ENCODE measurements at regions of chr2 and their contacts with region 1.

Region 1: DNA sequence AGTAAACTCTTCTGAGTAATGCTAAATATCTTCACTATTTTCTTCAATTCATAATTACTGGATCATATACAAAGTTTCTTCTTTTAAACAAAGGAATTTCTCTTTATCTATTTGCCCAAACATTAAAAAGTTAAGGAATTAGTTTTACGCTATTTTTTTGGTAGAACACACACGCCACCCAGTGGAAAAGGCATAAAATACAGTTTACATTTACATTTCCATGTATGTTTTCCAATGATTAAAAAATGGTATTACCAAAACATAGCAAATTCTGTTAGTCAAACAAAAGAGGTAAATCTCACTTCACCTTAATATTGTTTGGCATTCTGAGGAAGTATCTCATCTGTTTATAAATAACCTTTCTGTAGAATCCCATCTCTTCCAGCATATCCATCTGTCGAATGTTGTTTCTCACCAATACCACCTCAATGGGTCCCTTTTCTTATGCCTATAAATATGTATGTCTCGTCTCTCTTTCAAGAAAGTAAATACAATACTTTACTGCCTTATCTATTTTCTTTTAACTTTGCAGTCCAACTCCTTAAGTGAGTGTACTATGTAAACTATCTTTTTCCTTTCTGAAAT is 7.2 kb downstream of the BOLL start:
- DNase-seq: peak; percentile 36
- H3K4me3 Mint-ChIP-seq: no peak overlapping the region
- H3K27ac Mint-ChIP-seq: no peak overlapping the region
- H3K4me1 Mint-ChIP-seq: peaks cover 4% of the 10 kb centered on the region
- H3K27me3 Mint-ChIP-seq: peaks cover 6% of the 10 kb centered on the region

Region 2: DNA sequence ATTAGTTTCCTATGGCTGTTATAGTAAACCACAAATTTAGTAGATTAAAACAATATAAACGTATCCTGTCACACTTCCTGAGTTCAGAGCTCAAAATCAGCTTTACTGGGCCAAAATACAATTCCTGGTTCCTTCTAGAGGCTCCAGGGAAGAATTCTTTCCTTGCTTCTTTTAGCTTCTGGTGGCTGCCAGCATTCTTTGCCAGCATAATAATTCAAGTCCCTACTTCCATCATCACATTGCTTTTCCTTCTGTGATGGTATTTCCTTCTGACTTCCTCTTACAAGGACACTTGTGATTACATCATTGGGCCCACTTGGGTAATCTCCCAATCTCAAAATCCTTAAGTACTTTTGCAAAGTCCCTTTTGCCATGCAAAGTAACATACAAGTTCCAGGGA is 221.5 kb before region 1 on chr2:
- CTCF ChIA-PET with region 1: no interaction called
- DNase-seq: no peak
- H3K4me3 Mint-ChIP-seq: no peak overlapping the region
- H3K27ac Mint-ChIP-seq: peak overlapping the region; percentile 61
- H3K4me1 Mint-ChIP-seq: no peaks in the 10 kb centered on the region
- H3K27me3 Mint-ChIP-seq: no peaks in the 10 kb centered on the region

Region 3: DNA sequence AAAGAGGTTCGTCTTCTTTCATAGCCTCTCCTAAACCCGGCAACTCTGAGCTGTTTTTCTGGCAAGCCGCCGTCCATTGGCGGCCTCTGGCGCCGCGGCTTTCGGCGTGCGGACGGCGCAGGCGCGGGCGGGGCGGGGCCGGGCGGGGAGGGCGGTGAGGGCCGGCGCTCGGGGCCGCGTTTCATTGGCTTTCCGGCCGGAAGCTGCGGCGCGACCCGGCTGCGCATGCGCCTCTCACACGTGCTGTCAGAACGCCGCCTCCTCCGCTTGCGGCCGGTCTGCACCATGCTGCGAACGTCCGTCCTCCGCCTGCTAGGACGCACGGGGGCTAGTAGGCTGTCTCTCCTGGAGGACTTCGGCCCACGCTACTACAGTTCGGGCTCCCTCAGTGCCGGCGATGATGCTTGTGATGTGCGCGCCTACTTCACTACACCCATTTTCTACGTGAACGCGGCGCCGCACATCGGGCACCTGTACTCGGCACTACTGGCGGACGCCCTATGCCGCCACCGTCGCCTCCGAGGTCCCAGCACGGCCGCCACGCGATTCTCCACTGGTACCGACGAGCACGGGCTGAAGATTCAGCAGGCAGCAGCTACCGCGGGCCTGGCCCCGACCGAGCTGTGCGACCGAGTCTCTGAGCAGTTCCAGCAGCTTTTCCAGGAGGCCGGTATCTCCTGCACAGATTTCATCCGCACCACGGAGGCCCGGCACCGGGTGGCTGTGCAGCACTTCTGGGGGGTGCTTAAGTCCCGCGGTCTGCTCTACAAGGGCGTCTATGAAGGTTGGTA is 72.6 kb before region 1 on chr2 and contains the start of gene MARS2:
- CTCF ChIA-PET with region 1: interaction called, 23 read pairs
- DNase-seq: peak; percentile 94
- H3K4me3 Mint-ChIP-seq: peak within 1 kb of the TSS; percentile 86
- H3K27ac Mint-ChIP-seq: peak within 1 kb of the TSS; percentile 88
- H3K4me1 Mint-ChIP-seq: peaks cover 43% of the 10 kb centered on the region
- H3K27me3 Mint-ChIP-seq: peaks cover 3% of the 10 kb centered on the region

Region 4: DNA sequence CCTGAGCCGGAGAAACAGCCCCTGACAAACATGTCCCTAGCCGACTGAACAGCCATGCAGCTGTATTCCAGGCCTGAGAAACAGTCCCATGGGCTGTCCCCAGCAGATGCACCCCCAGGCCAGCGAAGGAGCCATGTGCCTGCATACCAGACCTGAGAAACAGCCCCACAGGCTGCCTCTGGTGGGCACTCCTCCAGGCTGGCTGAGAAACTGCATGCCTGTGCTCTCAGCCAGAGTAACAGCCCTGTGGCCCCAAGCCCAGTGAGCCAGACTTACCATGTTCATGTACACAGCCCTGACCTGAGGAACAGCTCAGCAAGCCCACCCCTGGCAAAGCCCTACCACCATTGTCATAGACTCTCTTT is 17.6 kb before region 1 on chr2:
- CTCF ChIA-PET with region 1: no interaction called
- DNase-seq: no peak
- H3K4me3 Mint-ChIP-seq: no peak overlapping the region
- H3K27ac Mint-ChIP-seq: no peak overlapping the region
- H3K4me1 Mint-ChIP-seq: no peaks in the 10 kb centered on the region
- H3K27me3 Mint-ChIP-seq: no peaks in the 10 kb centered on the region

Measured in activated naive CD4-positive, alpha-beta T cell treated with anti-CD3 and anti-CD28 coated beads, Interleukin-2, amount 10 ng/mL, durations not matched to agents 7 days and 5 days (primary cell).